Calu3 (cell line): ENCODE measurements at regions of chr6 and their contacts with region 1.

Region 1: DNA sequence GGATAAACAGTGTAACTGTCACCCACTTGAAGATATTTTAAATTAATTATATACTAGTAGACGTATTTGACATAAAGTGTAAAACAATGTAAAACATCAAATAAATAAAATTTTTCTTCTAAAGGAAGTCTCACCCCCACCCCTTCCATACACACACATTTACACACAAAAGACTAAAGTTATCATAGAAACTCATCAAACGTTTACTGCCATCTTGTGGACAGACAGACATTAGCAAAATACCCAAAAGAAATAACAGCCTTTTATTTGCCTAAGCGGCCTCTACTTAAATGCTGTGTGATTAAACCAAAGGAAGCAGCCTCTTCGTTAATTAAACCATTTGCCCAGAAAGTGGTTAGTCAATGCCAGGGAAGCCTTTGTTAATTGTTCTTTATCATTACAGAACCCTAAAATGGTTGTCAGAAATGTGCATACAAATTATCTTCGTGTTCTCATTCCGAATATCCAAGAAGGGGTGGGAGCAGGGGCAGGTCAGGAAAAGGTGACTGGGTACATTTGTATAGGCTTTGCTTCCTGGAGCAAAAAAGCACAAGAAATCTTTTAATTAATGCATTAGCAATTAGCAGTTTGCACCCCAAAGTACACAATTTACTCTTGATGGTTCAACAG is 176.2 kb upstream of the SASH1 start:
- DNase-seq: no peak
- H3K4me3 Mint-ChIP-seq: no peak overlapping the region
- H3K27ac Mint-ChIP-seq: no peak overlapping the region
- H3K4me1 Mint-ChIP-seq: no peaks in the 10 kb centered on the region
- H3K27me3 Mint-ChIP-seq: no peaks in the 10 kb centered on the region
- CTCF ChIP-seq: no peak

Region 2: GRCh38 chr6:147390909-147391536 is 775.4 kb before region 1 on chr6:
- CTCF ChIA-PET with region 1: no interaction called
- intact Hi-C with region 1: loop called (anchors 2 kb)
- DNase-seq: no peak
- H3K4me3 Mint-ChIP-seq: no peak overlapping the region
- H3K27ac Mint-ChIP-seq: no peak overlapping the region
- H3K4me1 Mint-ChIP-seq: no peaks in the 10 kb centered on the region
- H3K27me3 Mint-ChIP-seq: no peaks in the 10 kb centered on the region
- CTCF ChIP-seq: no peak

Region 3: DNA sequence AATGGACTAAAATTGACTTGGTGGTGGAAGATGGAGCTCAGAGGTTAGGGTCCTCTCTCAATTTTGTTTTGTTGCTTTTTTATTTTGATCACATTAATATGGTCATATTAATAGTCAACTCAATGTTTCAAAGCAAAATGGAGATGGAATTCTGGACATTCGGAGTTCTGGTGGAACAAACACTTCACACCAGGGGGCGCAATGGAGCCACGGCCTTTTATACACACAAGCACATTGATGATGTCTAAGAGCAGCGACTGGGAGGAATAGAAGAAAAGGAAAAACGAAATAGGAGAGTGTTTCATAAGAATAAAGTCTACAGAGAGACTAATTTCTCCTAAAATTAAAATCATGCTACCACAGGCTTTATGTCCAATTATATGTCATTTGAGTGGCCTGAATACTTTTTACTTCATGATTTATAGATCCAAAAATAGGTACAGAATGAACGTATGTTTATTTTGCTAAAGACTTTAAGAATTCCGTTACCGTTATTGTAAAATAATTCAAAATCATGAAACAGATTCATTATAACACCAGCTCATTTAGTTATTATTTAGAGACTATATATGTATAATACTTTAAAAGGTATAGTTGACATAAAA is 21.4 kb before region 1 on chr6:
- CTCF ChIA-PET with region 1: no interaction called
- intact Hi-C with region 1: no loop called
- DNase-seq: peak; percentile 60
- H3K4me3 Mint-ChIP-seq: no peak overlapping the region
- H3K27ac Mint-ChIP-seq: no peak overlapping the region
- H3K4me1 Mint-ChIP-seq: peaks cover 19% of the 10 kb centered on the region
- H3K27me3 Mint-ChIP-seq: no peaks in the 10 kb centered on the region
- CTCF ChIP-seq: peak; percentile 53